Left ventricle myocardium superior (tissue), 1 donor: ENCODE measurements at regions of chr3 and their contacts with region 1.

Region 1: GRCh38 chr3:131840156-131840797 is 194.5 kb downstream of the CPNE4 start:
- DNase-seq: no peak
- ATAC-seq: no peak

Region 2: GRCh38 chr3:131957511-131957910 is 117.2 kb after region 1 on chr3:
- intact Hi-C with region 1: loop called (anchors 10 kb)
- DNase-seq: no peak
- ATAC-seq: no peak